Posterior vena cava (tissue), 2 donors: ENCODE measurements at regions of chr17 and their contacts with region 1.

Region 1: DNA sequence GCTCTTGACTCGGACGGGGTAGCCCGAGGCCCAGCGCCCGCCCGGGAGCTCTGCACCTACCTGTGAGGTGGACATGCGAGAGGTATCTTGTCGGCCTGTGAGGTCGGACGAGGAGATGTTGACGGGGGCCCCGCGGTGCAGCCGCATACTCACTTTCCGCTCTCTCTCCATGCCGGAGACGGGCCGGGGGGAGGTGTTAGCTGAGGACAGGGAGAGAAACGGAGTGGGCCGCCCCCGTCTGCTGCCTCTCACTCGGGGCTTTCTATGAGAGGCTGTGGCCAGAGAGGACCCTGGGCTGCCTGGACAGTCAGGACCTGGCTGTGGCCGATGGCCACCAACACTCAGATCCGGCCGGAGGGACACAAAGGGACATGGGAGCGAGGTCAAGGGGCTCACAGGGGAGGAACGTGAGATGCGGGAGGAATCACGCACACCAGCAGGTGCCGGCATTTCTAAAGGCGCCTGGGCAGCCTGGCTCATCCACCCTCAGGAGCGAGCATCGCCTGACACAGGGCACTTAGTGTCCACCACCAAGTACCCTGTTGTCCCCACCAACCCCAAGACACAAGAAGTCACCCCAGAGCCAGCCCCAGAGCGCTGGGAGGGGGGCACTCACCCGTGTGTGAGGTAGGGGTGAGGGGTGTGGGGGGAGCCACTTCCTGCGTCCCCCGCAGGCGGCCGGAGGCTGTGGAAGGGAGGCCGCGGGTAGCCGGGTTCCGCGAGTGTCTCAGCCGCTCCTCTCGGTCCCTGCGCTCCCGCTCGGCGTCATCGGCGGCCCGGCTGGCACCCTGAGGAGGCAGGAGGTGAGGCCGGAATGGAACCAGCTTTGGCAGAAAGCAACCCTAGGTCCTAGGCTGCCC is 20.2 kb downstream of the SLC16A3 start:
- DNase-seq: no peak

Region 2: GRCh38 chr17:82263641-82264040 is 14.6 kb after region 1 on chr17:
- intact Hi-C with region 1: loop called in 1 of 2 experiments (anchors 2 kb)
- DNase-seq: no peak

Region 3: GRCh38 chr17:82328141-82328993 is 79.3 kb after region 1 on chr17:
- intact Hi-C with region 1: loop called in 1 of 2 experiments (anchors 5 kb)
- DNase-seq: no peak